CD8-positive, alpha-beta T cell (primary cell): ENCODE measurements at regions of chr15 and their contacts with region 1.

Region 1: DNA sequence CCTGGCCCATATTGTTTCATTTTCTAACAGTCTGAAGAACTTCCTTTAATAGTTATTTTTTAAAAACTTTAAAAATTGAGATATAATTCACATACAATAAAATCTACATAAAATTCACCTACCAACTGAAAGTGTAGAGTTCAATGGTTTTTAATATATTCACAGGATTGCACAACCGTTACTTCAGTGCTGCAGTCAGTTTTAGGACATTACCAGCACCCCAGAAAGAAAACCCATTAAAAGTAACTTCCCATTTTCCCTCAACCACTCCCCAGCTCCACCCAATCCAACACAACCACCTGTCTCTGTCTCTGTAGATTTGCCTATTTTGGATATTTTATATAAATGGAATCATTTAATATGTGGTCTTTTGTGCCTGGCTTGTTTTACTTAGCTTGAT is 29.6 kb downstream of the MGA start:
- DNase-seq: no peak
- ATAC-seq: no peak
- H3K4me3 ChIP-seq: no peak overlapping the region
- H3K4me3 Mint-ChIP-seq: no peak overlapping the region
- H3K27ac ChIP-seq: no peak overlapping the region
- H3K27ac Mint-ChIP-seq: peak overlapping the region; percentile 57
- H3K4me1 ChIP-seq: peaks cover 41% of the 10 kb centered on the region
- H3K4me1 Mint-ChIP-seq: peaks cover 69% of the 10 kb centered on the region
- H3K27me3 ChIP-seq: no peaks in the 10 kb centered on the region
- H3K27me3 Mint-ChIP-seq: no peaks in the 10 kb centered on the region
- CTCF ChIP-seq: no peak

Region 2: DNA sequence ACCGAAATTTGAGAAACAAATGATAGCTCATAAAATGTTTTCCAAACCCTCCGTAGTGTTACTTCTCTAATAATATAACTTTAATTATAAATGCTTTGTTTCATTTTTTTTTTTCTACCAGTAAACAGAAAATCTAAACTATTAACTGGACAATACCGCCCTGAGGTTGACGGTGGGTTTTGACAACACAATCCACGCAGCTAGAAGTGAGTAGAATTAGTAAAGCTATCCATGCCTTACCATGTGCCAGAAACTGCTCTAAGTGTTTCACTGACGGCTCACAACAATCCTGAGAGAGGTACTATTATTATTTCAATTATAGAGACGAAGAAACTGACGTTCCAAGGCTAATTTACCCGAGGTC is 287.9 kb before region 1 on chr15:
- CTCF ChIA-PET with region 1: no interaction called
- POLR2A ChIA-PET with region 1: no interaction called
- intact Hi-C with region 1: no loop called
- DNase-seq: no peak
- ATAC-seq: no peak
- H3K4me3 ChIP-seq: peak overlapping the region; percentile 81 to 95
- H3K4me3 Mint-ChIP-seq: peak overlapping the region; percentile 96
- H3K27ac ChIP-seq: peak overlapping the region; percentile 81 to 84
- H3K27ac Mint-ChIP-seq: peak overlapping the region; percentile 96
- H3K4me1 ChIP-seq: peaks cover 10% of the 10 kb centered on the region
- H3K4me1 Mint-ChIP-seq: peaks cover 23% of the 10 kb centered on the region
- H3K27me3 ChIP-seq: no peaks in the 10 kb centered on the region
- H3K27me3 Mint-ChIP-seq: no peaks in the 10 kb centered on the region
- CTCF ChIP-seq: no peak

Region 3: GRCh38 chr15:41746802-41747201 is 57.0 kb after region 1 on chr15:
- CTCF ChIA-PET with region 1: no interaction called
- POLR2A ChIA-PET with region 1: no interaction called
- intact Hi-C with region 1: loop called in 1 of 2 experiments (anchors 10 kb)
- DNase-seq: no peak
- ATAC-seq: no peak
- H3K4me3 ChIP-seq: no peak overlapping the region
- H3K4me3 Mint-ChIP-seq: no peak overlapping the region
- H3K27ac ChIP-seq: no peak overlapping the region
- H3K27ac Mint-ChIP-seq: no peak overlapping the region
- H3K4me1 ChIP-seq: no peaks in the 10 kb centered on the region
- H3K4me1 Mint-ChIP-seq: no peaks in the 10 kb centered on the region
- H3K27me3 ChIP-seq: no peaks in the 10 kb centered on the region
- H3K27me3 Mint-ChIP-seq: no peaks in the 10 kb centered on the region
- CTCF ChIP-seq: no peak

Region 4: DNA sequence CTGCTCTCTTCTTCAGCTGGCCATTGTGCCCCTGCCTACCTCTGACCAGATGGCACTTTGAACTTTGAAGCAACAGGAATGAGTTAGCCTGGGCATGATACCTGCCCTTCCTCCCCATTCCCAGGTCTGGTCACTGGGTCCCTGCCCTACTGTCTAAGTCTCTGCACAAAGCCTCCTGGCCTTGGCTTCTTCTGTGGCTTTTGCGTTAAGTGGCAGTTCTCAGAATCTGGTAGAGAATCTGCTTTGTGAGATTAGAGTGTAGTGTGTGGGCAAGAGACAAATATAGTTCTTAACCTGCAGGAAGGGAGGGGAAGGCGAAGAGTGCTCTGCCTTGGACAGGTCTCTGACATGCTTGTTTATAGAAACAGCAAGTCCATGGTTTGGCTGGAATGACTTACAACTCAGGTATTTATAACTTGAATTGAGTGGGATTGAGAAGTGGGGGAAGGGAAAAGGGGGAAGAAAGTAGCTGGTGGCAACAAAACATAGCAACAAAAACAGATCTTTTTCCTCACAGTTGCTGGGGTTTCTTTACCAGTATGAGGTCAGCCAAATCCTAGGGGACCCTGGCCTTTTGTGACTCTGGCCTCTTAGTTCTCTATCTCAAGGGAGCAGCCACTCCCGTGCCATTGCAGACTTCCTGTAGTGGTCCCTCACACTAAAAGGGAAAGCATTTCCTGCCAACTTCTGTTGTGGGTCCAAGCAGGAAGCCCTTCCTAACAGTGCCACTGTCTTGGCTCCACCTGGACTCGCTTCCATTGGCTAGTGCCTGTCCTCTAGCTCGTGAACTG is 101.1 kb after region 1 on chr15:
- CTCF ChIA-PET with region 1: no interaction called
- POLR2A ChIA-PET with region 1: no interaction called
- intact Hi-C with region 1: no loop called
- DNase-seq: no peak
- ATAC-seq: no peak
- H3K4me3 ChIP-seq: no peak overlapping the region
- H3K4me3 Mint-ChIP-seq: no peak overlapping the region
- H3K27ac ChIP-seq: peak overlapping the region in 1 of 2 experiments; percentile 10
- H3K27ac Mint-ChIP-seq: no peak overlapping the region
- H3K4me1 ChIP-seq: peaks cover 32% of the 10 kb centered on the region
- H3K4me1 Mint-ChIP-seq: peaks cover 48% of the 10 kb centered on the region
- H3K27me3 ChIP-seq: no peaks in the 10 kb centered on the region
- H3K27me3 Mint-ChIP-seq: no peaks in the 10 kb centered on the region
- CTCF ChIP-seq: no peak